ENCODE measurements at regions of chr20 and their contacts with region 1.

Region 1: DNA sequence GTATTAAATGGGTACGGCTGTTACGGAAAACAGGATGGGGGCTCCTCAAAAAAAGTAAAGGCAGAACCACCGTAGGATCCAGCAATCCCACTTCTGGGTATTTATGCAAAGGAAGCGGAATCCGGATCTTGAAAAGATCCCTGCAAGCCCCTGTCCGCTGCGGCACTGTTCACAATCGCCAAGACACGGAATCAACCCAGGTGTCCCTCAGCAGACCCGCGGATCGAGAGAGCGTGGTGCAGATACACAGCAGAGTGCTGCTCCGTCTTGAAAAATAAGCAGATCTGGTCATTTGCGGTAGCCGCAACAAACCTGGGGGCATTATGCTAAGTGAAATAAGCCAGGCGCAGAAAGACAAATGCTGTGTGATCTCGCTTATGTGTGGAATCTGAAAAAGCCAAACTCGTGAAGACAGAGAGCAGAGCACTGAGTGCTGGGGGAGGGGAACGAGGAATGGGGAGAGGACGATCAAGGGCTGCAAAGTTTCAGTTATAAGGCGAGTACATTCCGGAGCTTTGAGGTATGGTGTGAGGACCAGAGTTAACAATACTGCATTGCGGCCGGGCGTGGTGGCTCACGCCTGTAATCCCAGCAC is 41.3 kb downstream of the NTSR1 start:
- DNase-seq: no peak
- H3K4me3 ChIP-seq: no peak overlapping the region
- H3K4me3 Mint-ChIP-seq: no peak overlapping the region
- H3K27ac ChIP-seq: no peak overlapping the region
- H3K27ac Mint-ChIP-seq: peak overlapping the region in 1 of 7 donors; percentile 17
- H3K4me1 ChIP-seq: peaks cover 12 to 19% of the 10 kb centered on the region in 2 donors
- H3K4me1 Mint-ChIP-seq: peaks cover 19% of the 10 kb centered on the region
- H3K27me3 ChIP-seq: no peaks in the 10 kb centered on the region
- H3K27me3 Mint-ChIP-seq: peaks cover 3 to 9% (median 8%) of the 10 kb centered on the region in 3 donors
- CTCF ChIP-seq: no peak

Region 2: GRCh38 chr20:62780204-62780603 is 30.3 kb after region 1 on chr20:
- intact Hi-C with region 1: loop called in 1 of 2 experiments (anchors 2 kb)
- DNase-seq: no peak
- H3K4me3 ChIP-seq: no peak overlapping the region
- H3K4me3 Mint-ChIP-seq: no peak overlapping the region
- H3K27ac ChIP-seq: no peak overlapping the region
- H3K27ac Mint-ChIP-seq: no peak overlapping the region
- H3K4me1 ChIP-seq: peaks cover 25 to 27% of the 10 kb centered on the region in 2 donors
- H3K4me1 Mint-ChIP-seq: peaks cover 30% of the 10 kb centered on the region
- H3K27me3 ChIP-seq: no peaks in the 10 kb centered on the region
- H3K27me3 Mint-ChIP-seq: peaks cover 0 to 7% (median 3%) of the 10 kb centered on the region in 3 donors
- CTCF ChIP-seq: no peak

Region 3: DNA sequence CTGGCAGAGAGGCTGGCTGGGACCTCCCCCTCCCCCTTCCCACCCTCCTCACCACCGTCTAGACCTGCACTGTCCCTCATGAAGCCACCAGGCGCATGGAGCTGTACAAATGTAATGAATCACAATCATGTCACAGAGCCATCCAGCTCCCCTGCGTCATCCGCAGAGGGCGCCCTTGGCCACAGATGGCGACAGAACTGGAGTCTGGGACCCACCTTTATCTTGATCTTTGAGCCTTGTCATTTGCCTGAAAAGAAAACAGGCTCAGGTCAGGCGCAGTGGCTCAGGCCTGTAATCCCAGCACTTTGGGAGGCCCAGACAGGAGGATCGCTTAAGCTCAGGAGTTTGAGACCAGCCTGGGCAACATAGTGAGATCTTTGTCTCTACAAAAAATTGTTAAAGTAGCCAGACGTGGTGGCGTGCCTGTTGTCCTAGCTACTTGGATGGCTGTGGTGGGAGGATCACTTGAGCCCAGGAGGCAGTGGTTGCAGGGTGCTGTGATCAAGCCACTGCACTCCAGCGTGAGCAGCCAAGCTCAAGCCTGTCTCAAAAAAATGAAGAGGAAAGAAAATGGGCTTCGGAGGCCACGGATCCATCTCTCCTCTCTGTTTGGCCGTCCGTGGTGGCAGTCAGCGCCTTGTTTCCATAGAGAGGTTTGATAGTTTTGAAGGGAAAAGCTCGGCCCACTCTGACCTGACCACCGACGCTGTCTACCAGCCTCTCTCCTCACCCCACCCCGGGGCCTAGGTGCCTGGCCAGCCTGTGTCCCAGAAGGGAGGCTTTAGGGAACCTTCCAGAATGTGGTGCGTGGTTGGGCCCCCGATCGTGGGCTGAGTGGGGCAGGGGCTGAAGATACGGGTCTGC is 73.1 kb after region 1 on chr20:
- intact Hi-C with region 1: no loop called
- DNase-seq: peak; percentile 42 to 66 (median 49)
- H3K4me3 ChIP-seq: no peak overlapping the region
- H3K4me3 Mint-ChIP-seq: no peak overlapping the region
- H3K27ac ChIP-seq: no peak overlapping the region
- H3K27ac Mint-ChIP-seq: peak overlapping the region in 2 of 7 donors; percentile 35 to 38
- H3K4me1 ChIP-seq: peaks cover 12 to 15% of the 10 kb centered on the region in 2 donors
- H3K4me1 Mint-ChIP-seq: peaks cover 2% of the 10 kb centered on the region
- H3K27me3 ChIP-seq: peaks cover 4 to 16% of the 10 kb centered on the region in 2 donors
- H3K27me3 Mint-ChIP-seq: peaks cover 18 to 26% (median 24%) of the 10 kb centered on the region in 3 donors
- CTCF ChIP-seq: peak; percentile 47